ENCODE measurements at regions of chr19 and their contacts with region 1.

Region 1: GRCh38 chr19:2648528-2648937 is 54.0 kb downstream of the GNG7 start:
- DNase-seq: peak; percentile 78 to 84 (median 83)
- ATAC-seq: peak; percentile 95
- H3K4me3 ChIP-seq: no peak overlapping the region
- H3K27ac ChIP-seq: no peak overlapping the region
- H3K4me1 ChIP-seq: peaks cover 0 to 11% of the 10 kb centered on the region in 2 experiments; a peak in 2 of 5 replicates
- H3K27me3 ChIP-seq: peaks cover 21 to 51% of the 10 kb centered on the region in 2 experiments; a peak in 4 of 5 replicates
- CTCF ChIP-seq: peak; percentile 87 to 96 (median 91)
- EP300 ChIP-seq: no peak
- POLR2A ChIP-seq: no peak
- RAD21 ChIP-seq: peak; percentile 92 to 97

Region 2: GRCh38 chr19:2869618-2870017 is 221.1 kb after region 1 on chr19:
- CTCF ChIA-PET with region 1: interaction called, 4 read pairs
- POLR2A ChIA-PET with region 1: no interaction called
- in situ Hi-C with region 1: loop called (anchors 5 kb)
- intact Hi-C with region 1: loop called (anchors 5 kb)
- DNase-seq: no peak
- ATAC-seq: no peak
- H3K4me3 ChIP-seq: no peak overlapping the region
- H3K27ac ChIP-seq: no peak overlapping the region
- H3K4me1 ChIP-seq: peaks cover 11 to 18% of the 10 kb centered on the region in 2 experiments; a peak in 4 of 5 replicates
- H3K27me3 ChIP-seq: no peaks in the 10 kb centered on the region
- CTCF ChIP-seq: no peak
- EP300 ChIP-seq: no peak
- POLR2A ChIP-seq: no peak
- RAD21 ChIP-seq: no peak